ENCODE measurements at regions of chr2 and their contacts with region 1.

Region 1: GRCh38 chr2:217090024-217090473 is 230.2 kb upstream of the TNP1 start:
- DNase-seq: peak; percentile 24
- H3K4me3 ChIP-seq: no peak overlapping the region
- H3K27ac ChIP-seq: no peak overlapping the region
- H3K4me1 ChIP-seq: peaks cover 6% of the 10 kb centered on the region
- H3K27me3 ChIP-seq: no peaks in the 10 kb centered on the region
- CTCF ChIP-seq: no peak
- POLR2A ChIP-seq: no peak

Region 2: DNA sequence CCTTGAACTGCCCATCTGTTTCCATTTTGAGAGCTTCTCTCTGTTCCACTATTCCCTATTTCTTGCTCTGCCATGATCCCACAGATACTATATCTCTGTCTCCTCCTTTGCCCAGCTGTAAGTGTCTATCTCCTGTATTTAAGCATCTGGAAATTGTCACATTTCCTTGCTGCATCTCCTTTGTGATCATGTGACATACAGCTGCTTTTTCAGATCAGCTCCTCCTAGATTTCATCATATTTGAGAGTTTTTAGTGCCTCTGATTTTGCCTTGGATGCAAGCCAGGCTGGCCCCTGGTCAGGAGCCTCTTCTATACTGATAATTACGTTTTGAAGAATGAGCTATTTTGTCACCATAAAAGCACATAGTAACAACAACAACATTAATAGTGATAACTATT is 98.5 kb before region 1 on chr2:
- CTCF ChIA-PET with region 1: no interaction called
- POLR2A ChIA-PET with region 1: no interaction called
- dilution Hi-C with region 1: no loop called
- intact Hi-C with region 1: no loop called
- DNase-seq: no peak
- H3K4me3 ChIP-seq: no peak overlapping the region
- H3K27ac ChIP-seq: no peak overlapping the region
- H3K4me1 ChIP-seq: no peaks in the 10 kb centered on the region
- H3K27me3 ChIP-seq: peaks cover 0 to 2% of the 10 kb centered on the region in 2 experiments
- CTCF ChIP-seq: no peak
- POLR2A ChIP-seq: no peak

Region 3: DNA sequence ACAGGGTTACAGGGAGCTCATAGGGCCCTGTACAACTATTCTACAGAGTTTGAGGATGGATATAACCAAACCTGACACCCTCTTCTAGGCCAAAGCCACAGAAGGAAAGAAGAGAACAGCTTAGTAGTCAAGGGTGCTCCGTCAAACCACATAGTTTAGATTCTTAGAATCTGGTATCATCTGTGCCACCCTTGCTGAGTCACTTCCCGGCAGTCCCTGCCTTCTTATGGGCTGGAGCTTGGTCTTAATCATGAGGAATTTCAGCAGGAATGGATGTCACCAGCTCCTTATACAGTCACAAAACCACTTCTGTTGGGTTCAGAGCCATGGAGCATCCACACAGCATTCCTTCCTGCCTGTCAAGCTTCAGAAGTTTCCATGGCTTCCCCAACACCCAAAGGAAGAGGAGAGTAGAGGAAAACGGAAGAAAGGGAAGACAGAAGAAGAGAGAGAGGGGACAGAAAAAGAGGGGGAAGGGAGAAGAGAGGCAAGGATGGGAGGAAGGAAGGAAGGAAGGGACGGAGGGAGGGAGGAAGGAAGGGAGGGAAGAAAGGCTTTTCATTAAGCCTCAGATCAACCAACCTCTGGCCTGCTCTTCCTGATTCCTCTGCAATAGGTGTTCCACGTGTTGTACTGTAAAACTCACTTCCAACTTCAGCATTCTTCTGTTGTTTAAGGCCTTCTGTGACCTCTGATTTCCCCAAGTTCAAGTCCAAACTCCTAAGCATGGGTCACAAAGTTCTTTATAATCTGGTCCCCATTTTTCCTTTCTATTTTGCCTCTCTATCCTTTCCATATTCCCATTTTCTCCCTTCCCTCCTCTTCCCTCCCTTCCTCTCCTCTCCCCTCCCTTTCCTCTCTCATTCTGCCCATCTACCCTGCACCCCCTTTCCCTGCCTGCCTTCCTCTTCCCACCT is 15.9 kb after region 1 on chr2:
- CTCF ChIA-PET with region 1: interaction called, 3 read pairs
- POLR2A ChIA-PET with region 1: no interaction called
- dilution Hi-C with region 1: no loop called
- intact Hi-C with region 1: loop called (anchors 1 kb)
- DNase-seq: peak; percentile 54
- H3K4me3 ChIP-seq: no peak overlapping the region
- H3K27ac ChIP-seq: peak overlapping the region; percentile 42
- H3K4me1 ChIP-seq: peaks cover 20% of the 10 kb centered on the region
- H3K27me3 ChIP-seq: no peaks in the 10 kb centered on the region
- CTCF ChIP-seq: no peak
- POLR2A ChIP-seq: no peak